ENCODE measurements at regions of chr9 and their contacts with region 1.

Region 1: DNA sequence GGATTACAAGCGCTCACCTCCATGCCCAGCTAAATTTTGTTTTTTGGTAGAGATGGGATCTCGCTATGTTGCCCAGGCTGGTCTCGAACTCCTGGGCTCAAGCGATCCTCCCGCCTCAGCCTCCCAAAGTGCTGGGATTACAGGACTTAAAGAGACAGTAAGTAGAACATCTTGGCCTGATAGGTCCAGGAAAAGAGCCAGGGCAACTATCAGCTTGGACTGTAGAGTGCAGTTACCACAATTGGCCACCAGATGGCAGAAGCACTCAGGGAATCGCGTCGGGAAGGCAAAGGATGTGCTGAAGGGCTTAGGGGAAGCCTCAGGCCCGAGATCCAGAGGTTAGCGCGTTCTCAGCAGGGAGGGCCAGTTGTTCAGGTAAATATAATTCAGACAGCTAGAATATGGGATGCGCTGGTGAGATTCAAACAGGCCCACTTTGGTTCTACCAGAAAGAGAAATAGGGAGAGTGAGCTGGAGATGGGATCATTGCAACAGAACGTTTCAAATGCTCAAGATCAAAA is 21.5 kb downstream of the C9orf57 start:
- DNase-seq: peak; percentile 69
- ATAC-seq: peak; percentile 98
- H3K4me3 ChIP-seq: no peak overlapping the region
- H3K27ac ChIP-seq: no peak overlapping the region
- H3K4me1 ChIP-seq: no peaks in the 10 kb centered on the region
- H3K27me3 ChIP-seq: peaks cover 2% of the 10 kb centered on the region
- CTCF ChIP-seq: peak; percentile 93
- POLR2A ChIP-seq: peak; percentile 35; the same call in 1 of the 2 replicates
- RAD21 ChIP-seq: peak; percentile 94

Region 2: GRCh38 chr9:72022841-72023240 is 16.1 kb before region 1 on chr9:
- CTCF ChIA-PET with region 1: interaction called, 17 read pairs
- POLR2A ChIA-PET with region 1: no interaction called
- dilution Hi-C with region 1: no loop called
- in situ Hi-C with region 1: no loop called
- intact Hi-C with region 1: no loop called
- DNase-seq: peak; percentile 85
- ATAC-seq: peak; percentile 84
- H3K4me3 ChIP-seq: no peak overlapping the region
- H3K27ac ChIP-seq: no peak overlapping the region
- H3K4me1 ChIP-seq: no peaks in the 10 kb centered on the region
- H3K27me3 ChIP-seq: no peaks in the 10 kb centered on the region
- CTCF ChIP-seq: no peak
- POLR2A ChIP-seq: no peak
- RAD21 ChIP-seq: no peak

Region 3: GRCh38 chr9:72599879-72600534 is 561.1 kb after region 1 on chr9:
- CTCF ChIA-PET with region 1: no interaction called
- POLR2A ChIA-PET with region 1: no interaction called
- dilution Hi-C with region 1: no loop called
- in situ Hi-C with region 1: loop called (anchors 25 kb)
- intact Hi-C with region 1: no loop called
- DNase-seq: no peak
- ATAC-seq: no peak
- H3K4me3 ChIP-seq: no peak overlapping the region
- H3K27ac ChIP-seq: no peak overlapping the region
- H3K4me1 ChIP-seq: no peaks in the 10 kb centered on the region; the same call in 1 of the 2 replicates
- H3K27me3 ChIP-seq: no peaks in the 10 kb centered on the region
- CTCF ChIP-seq: no peak
- POLR2A ChIP-seq: no peak
- RAD21 ChIP-seq: no peak

Region 4: GRCh38 chr9:72827950-72828731 is 789.2 kb after region 1 on chr9:
- CTCF ChIA-PET with region 1: no interaction called
- POLR2A ChIA-PET with region 1: no interaction called
- dilution Hi-C with region 1: no loop called
- in situ Hi-C with region 1: loop called (anchors 10 kb)
- intact Hi-C with region 1: loop called (anchors 2 kb)
- DNase-seq: no peak
- ATAC-seq: no peak
- H3K4me3 ChIP-seq: no peak overlapping the region
- H3K27ac ChIP-seq: no peak overlapping the region
- H3K4me1 ChIP-seq: no peaks in the 10 kb centered on the region
- H3K27me3 ChIP-seq: no peaks in the 10 kb centered on the region; the same call in 1 of the 2 replicates
- CTCF ChIP-seq: no peak
- POLR2A ChIP-seq: no peak
- RAD21 ChIP-seq: no peak

Region 5: GRCh38 chr9:73081979-73082657 is 1043.2 kb after region 1 on chr9:
- CTCF ChIA-PET with region 1: no interaction called
- POLR2A ChIA-PET with region 1: no interaction called
- dilution Hi-C with region 1: no loop called
- in situ Hi-C with region 1: no loop called
- intact Hi-C with region 1: loop called (anchors 5 kb)
- DNase-seq: peak; percentile 27
- ATAC-seq: peak; percentile 82
- H3K4me3 ChIP-seq: no peak overlapping the region
- H3K27ac ChIP-seq: no peak overlapping the region
- H3K4me1 ChIP-seq: no peaks in the 10 kb centered on the region
- H3K27me3 ChIP-seq: no peaks in the 10 kb centered on the region; the same call in 1 of the 2 replicates
- CTCF ChIP-seq: peak; percentile 69
- POLR2A ChIP-seq: no peak
- RAD21 ChIP-seq: peak; percentile 63